ENCODE measurements at regions of chr7 and their contacts with region 1.

Region 1: DNA sequence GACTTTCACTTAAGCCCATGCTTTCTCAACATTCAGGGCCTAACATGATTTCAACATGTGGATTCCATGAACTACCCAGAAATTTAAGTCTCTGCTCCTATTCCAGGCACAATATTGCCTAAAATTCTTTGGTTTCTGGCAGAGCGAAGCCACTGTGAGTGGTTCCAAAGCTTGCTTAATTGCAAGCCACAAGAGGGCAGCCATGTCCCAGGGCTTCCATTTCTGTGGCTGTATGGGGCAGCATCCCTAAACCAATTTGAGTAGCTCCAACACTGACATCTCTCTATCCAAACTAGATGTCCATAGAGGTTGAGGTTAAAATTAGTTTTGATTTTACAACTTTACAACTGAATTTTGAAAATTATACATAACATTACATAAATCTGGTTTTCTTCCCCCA is 56.3 kb upstream of the MDFIC start:
- DNase-seq: peak; percentile 64
- H3K4me3 ChIP-seq: no peak overlapping the region
- H3K27ac ChIP-seq: no peak overlapping the region
- H3K4me1 ChIP-seq: no peaks in the 10 kb centered on the region
- H3K27me3 ChIP-seq: no peaks in the 10 kb centered on the region
- CTCF ChIP-seq: peak; percentile 65 to 67
- POLR2A ChIP-seq: no peak

Region 2: GRCh38 chr7:115087437-115087836 is 221.9 kb after region 1 on chr7:
- CTCF ChIA-PET with region 1: interaction called, 11 read pairs
- POLR2A ChIA-PET with region 1: no interaction called
- dilution Hi-C with region 1: no loop called
- intact Hi-C with region 1: loop called (anchors 5 kb)
- DNase-seq: peak; percentile 97
- H3K4me3 ChIP-seq: no peak overlapping the region
- H3K27ac ChIP-seq: peak overlapping the region; percentile 44
- H3K4me1 ChIP-seq: peaks cover 16% of the 10 kb centered on the region
- H3K27me3 ChIP-seq: no peaks in the 10 kb centered on the region
- CTCF ChIP-seq: no peak
- POLR2A ChIP-seq: no peak

Region 3: GRCh38 chr7:115356139-115356746 is 490.7 kb after region 1 on chr7:
- CTCF ChIA-PET with region 1: interaction called, 6 read pairs
- POLR2A ChIA-PET with region 1: no interaction called
- dilution Hi-C with region 1: no loop called
- intact Hi-C with region 1: loop called (anchors 5 kb)
- DNase-seq: peak; percentile 16
- H3K4me3 ChIP-seq: no peak overlapping the region
- H3K27ac ChIP-seq: no peak overlapping the region
- H3K4me1 ChIP-seq: no peaks in the 10 kb centered on the region
- H3K27me3 ChIP-seq: no peaks in the 10 kb centered on the region
- CTCF ChIP-seq: peak; percentile 24 to 43
- POLR2A ChIP-seq: no peak

Region 4: DNA sequence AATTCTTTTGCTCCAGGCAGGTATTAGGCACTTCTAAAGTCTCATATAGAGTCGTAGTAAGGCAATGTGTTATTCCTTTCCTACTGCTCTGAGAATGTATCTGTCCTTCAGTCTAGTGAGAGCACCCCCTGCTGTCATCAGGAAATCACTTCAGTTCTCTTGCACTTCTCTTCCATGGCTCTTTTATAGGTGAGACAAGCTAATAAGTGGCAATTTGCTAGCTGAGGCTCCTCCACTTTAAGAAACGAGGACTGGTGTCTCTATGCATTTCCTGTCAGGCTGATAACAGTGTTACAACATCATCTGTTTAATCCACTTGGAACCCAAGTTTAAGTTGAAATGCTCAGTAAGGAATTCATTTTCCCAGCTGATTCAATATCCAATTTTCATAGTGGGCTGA is 814.4 kb after region 1 on chr7:
- CTCF ChIA-PET with region 1: interaction called, 76 read pairs
- POLR2A ChIA-PET with region 1: no interaction called
- dilution Hi-C with region 1: no loop called
- intact Hi-C with region 1: loop called (anchors 1 kb)
- DNase-seq: peak; percentile 45
- H3K4me3 ChIP-seq: no peak overlapping the region
- H3K27ac ChIP-seq: no peak overlapping the region
- H3K4me1 ChIP-seq: no peaks in the 10 kb centered on the region
- H3K27me3 ChIP-seq: no peaks in the 10 kb centered on the region
- CTCF ChIP-seq: peak; percentile 19 to 55
- POLR2A ChIP-seq: no peak

Region 5: GRCh38 chr7:115910541-115911164 is 1045.1 kb after region 1 on chr7:
- CTCF ChIA-PET with region 1: interaction called, 11 read pairs
- POLR2A ChIA-PET with region 1: no interaction called
- dilution Hi-C with region 1: no loop called
- intact Hi-C with region 1: loop called (anchors 1 kb)
- DNase-seq: peak; percentile 64
- H3K4me3 ChIP-seq: no peak overlapping the region
- H3K27ac ChIP-seq: no peak overlapping the region
- H3K4me1 ChIP-seq: no peaks in the 10 kb centered on the region
- H3K27me3 ChIP-seq: no peaks in the 10 kb centered on the region
- CTCF ChIP-seq: peak in 1 of 2 donors; percentile 53
- POLR2A ChIP-seq: no peak